ENCODE measurements at regions of chr13 and their contacts with region 1.

Region 1: DNA sequence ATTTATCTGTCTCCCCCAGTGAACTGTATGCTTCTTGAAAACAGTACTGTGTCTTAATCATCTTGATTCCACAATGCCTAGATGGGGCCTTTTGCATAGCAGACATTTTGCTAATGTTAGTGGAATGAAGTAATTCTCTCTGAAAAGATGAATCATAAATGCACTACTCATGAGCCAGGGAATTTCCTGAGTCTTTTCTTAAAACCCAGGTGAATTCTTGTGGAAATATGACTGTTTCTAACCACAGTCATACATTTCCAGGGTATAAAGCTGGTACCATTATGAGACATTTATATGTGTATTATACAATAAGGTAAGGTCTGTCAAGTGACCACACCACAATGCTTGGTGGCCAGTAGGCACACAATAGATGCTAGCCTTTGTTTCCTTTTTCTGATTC is 5.5 kb upstream of the KCTD4 start:
- DNase-seq: peak; percentile 35
- ATAC-seq: peak; percentile 94
- H3K4me3 Mint-ChIP-seq: no peak overlapping the region
- H3K27ac Mint-ChIP-seq: no peak overlapping the region
- H3K4me1 Mint-ChIP-seq: peaks cover 34% of the 10 kb centered on the region
- H3K27me3 Mint-ChIP-seq: no peaks in the 10 kb centered on the region

Region 2: GRCh38 chr13:45021250-45021649 is 185.1 kb before region 1 on chr13:
- CTCF ChIA-PET with region 1: no interaction called
- POLR2A ChIA-PET with region 1: no interaction called
- intact Hi-C with region 1: no loop called
- DNase-seq: no peak
- ATAC-seq: no peak
- H3K4me3 Mint-ChIP-seq: no peak overlapping the region
- H3K27ac Mint-ChIP-seq: no peak overlapping the region
- H3K4me1 Mint-ChIP-seq: peaks cover 7% of the 10 kb centered on the region
- H3K27me3 Mint-ChIP-seq: no peaks in the 10 kb centered on the region

Region 3: GRCh38 chr13:45047394-45048310 is 158.7 kb before region 1 on chr13:
- CTCF ChIA-PET with region 1: interaction called, 5 read pairs
- POLR2A ChIA-PET with region 1: no interaction called
- intact Hi-C with region 1: loop called in 1 of 2 experiments (anchors 2 kb)
- DNase-seq: peak; percentile 90
- ATAC-seq: peak; percentile 85
- H3K4me3 Mint-ChIP-seq: peak overlapping the region; percentile 54
- H3K27ac Mint-ChIP-seq: no peak overlapping the region
- H3K4me1 Mint-ChIP-seq: peaks cover 18% of the 10 kb centered on the region
- H3K27me3 Mint-ChIP-seq: peaks cover 29% of the 10 kb centered on the region

Region 4: GRCh38 chr13:45119991-45120864 is 86.1 kb before region 1 on chr13 and contains the start of gene GTF2F2:
- CTCF ChIA-PET with region 1: interaction called, 3 read pairs
- POLR2A ChIA-PET with region 1: no interaction called
- intact Hi-C with region 1: loop called (anchors 1 kb)
- DNase-seq: peak; percentile 90
- ATAC-seq: peak; percentile 68
- H3K4me3 Mint-ChIP-seq: no peak within 1 kb of the TSS
- H3K27ac Mint-ChIP-seq: no peak within 1 kb of the TSS
- H3K4me1 Mint-ChIP-seq: peaks cover 5% of the 10 kb centered on the region
- H3K27me3 Mint-ChIP-seq: no peaks in the 10 kb centered on the region
- total RNA-seq, gene GTF2F2: 19.9 to 25.6 TPM

Region 5: GRCh38 chr13:45297456-45298205 is 91.3 kb after region 1 on chr13:
- CTCF ChIA-PET with region 1: no interaction called
- POLR2A ChIA-PET with region 1: no interaction called
- intact Hi-C with region 1: loop called in 1 of 2 experiments (anchors 1 kb)
- DNase-seq: peak; percentile 57
- ATAC-seq: peak; percentile 91
- H3K4me3 Mint-ChIP-seq: no peak overlapping the region
- H3K27ac Mint-ChIP-seq: peak overlapping the region; percentile 72
- H3K4me1 Mint-ChIP-seq: peaks cover 42% of the 10 kb centered on the region
- H3K27me3 Mint-ChIP-seq: no peaks in the 10 kb centered on the region

Region 6: DNA sequence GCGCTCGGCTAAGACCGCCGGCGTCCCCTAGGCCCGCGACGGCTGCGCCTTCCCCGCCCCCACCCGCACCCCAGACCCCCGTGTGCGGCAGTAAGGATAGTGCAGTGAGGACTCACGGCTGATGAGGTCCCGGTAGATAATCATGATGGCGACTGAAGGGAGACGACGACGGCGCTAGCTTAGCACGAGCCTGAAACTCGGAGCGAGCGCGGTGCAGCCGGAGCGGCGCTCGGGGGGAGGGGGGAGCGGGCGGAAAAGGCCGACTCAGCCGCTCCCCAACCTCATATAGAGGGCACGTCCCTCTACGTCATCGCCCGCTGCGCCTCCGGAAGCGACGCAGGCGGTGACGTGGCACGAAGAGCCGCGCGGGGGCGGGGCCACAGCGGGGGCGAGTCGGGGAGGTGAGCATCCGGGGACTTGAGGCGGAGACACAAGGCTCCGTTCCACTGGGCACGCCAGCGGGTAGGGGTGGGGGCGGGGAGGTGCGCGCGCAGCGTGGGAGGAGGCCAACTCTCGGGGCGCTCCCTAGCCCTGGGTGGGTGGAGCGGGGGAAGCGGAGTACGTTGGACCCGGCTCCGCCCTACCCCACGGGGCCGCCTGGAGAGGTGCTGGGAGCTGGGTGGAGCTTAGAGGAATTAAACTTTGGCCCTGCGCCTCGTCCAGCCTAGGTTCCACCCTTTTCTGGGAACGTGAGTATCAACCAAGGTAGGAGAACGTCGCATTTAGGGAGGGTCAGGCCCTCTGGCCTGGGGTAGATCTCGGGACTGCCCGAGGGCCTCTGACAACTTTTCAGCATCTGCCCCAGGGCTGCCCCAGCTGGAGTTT is 134.8 kb after region 1 on chr13 and contains the start of gene TPT1:
- CTCF ChIA-PET with region 1: no interaction called
- POLR2A ChIA-PET with region 1: no interaction called
- intact Hi-C with region 1: loop called in 1 of 2 experiments (anchors 1 kb)
- DNase-seq: peak; percentile 100
- ATAC-seq: peak; percentile 85
- H3K4me3 Mint-ChIP-seq: peak within 1 kb of the TSS; percentile 99
- H3K27ac Mint-ChIP-seq: peak within 1 kb of the TSS; percentile 99
- H3K4me1 Mint-ChIP-seq: peaks cover 45% of the 10 kb centered on the region
- H3K27me3 Mint-ChIP-seq: no peaks in the 10 kb centered on the region
- total RNA-seq, gene TPT1: 3,408 to 3,964 TPM

Region 7: GRCh38 chr13:45700971-45701900 is 494.9 kb after region 1 on chr13:
- CTCF ChIA-PET with region 1: no interaction called
- POLR2A ChIA-PET with region 1: no interaction called
- intact Hi-C with region 1: loop called in 1 of 2 experiments (anchors 5 kb)
- DNase-seq: peak; percentile 41
- ATAC-seq: peak; percentile 89
- H3K4me3 Mint-ChIP-seq: peak overlapping the region; percentile 4
- H3K27ac Mint-ChIP-seq: peak overlapping the region; percentile 84
- H3K4me1 Mint-ChIP-seq: peaks cover 30% of the 10 kb centered on the region
- H3K27me3 Mint-ChIP-seq: peaks cover 7% of the 10 kb centered on the region